GM12878 (cell line): ENCODE measurements at regions of chr15 and their contacts with region 1.

Region 1: GRCh38 chr15:41774062-41774881 is at the start of gene MAPKBP1:
- DNase-seq: peak; percentile 96
- ATAC-seq: peak; percentile 87
- H3K4me3 ChIP-seq: peak within 1 kb of the TSS; percentile 92
- H3K27ac ChIP-seq: peak within 1 kb of the TSS; percentile 77
- H3K4me1 ChIP-seq: peaks cover 12% of the 10 kb centered on the region
- H3K27me3 ChIP-seq: no peaks in the 10 kb centered on the region
- CTCF ChIP-seq: peak; percentile 85 to 98 (median 87)
- EP300 ChIP-seq: no peak; a peak in 1 of 4 replicates
- POLR2A ChIP-seq: peak; percentile 87
- RAD21 ChIP-seq: peak; percentile 53
- polyA plus RNA-seq, gene MAPKBP1: 0.44 to 0.50 TPM

Region 2: GRCh38 chr15:41161336-41161735 is 612.9 kb before region 1 on chr15:
- CTCF ChIA-PET with region 1: no interaction called
- POLR2A ChIA-PET with region 1: no interaction called
- RAD21 ChIA-PET with region 1: no interaction called
- SMC1A ChIA-PET with region 1: no interaction called
- in situ Hi-C with region 1: no loop called
- intact Hi-C with region 1: no loop called
- DNase-seq: no peak
- ATAC-seq: no peak
- H3K4me3 ChIP-seq: no peak overlapping the region
- H3K27ac ChIP-seq: no peak overlapping the region
- H3K4me1 ChIP-seq: no peaks in the 10 kb centered on the region
- H3K27me3 ChIP-seq: no peaks in the 10 kb centered on the region
- CTCF ChIP-seq: no peak
- EP300 ChIP-seq: no peak
- POLR2A ChIP-seq: no peak
- RAD21 ChIP-seq: no peak

Region 3: DNA sequence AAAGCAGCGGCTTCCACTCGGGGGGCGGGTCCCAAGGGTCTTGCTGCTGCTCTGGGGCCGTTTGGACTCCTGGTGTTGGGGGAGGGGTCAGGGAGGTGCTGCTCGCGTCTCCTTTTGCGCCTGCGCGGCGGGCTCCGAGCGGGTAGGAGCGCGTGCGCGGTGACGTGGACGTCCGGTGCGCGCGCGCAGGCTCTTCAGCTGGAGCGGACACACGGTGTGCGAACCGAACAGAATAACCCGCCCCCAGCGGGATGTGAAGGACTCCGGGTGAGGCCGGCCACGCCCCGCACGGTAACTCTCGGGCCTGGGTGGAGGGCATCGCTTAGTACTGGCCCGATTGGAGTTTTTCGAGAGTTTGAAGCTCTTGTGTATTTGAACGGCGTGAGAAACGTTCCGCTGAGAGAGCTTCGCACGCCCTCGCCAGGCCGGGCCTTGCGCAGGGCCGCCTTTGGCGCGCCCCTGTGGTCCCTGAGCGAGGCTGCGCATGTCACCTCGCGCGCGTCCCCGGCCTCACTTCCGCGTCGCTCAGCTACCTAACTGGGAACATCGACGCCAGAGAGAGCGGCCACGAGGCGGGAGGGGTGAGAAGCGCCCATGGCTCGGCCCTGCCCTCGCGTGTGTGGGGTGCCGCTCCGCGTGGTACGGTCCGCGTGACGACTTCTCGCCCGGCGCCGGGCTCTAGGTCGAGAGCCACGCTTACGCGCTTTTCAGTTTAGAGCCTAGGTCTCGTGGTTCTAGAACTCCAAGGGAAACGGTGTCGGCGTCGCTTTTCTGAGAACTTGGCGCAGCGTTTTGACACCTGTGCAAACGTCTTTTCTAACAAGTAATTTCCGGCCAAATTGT is 113.8 kb before region 1 on chr15 and contains the start of gene MGA:
- CTCF ChIA-PET with region 1: interaction called, 25 read pairs
- POLR2A ChIA-PET with region 1: interaction called, 5 read pairs
- RAD21 ChIA-PET with region 1: interaction called, 12 read pairs
- SMC1A ChIA-PET with region 1: interaction called, 19 read pairs
- in situ Hi-C with region 1: no loop called
- intact Hi-C with region 1: no loop called
- DNase-seq: peak; percentile 84
- ATAC-seq: peak; percentile 87
- H3K4me3 ChIP-seq: peak within 1 kb of the TSS; percentile 85
- H3K27ac ChIP-seq: peak within 1 kb of the TSS; percentile 79
- H3K4me1 ChIP-seq: peaks cover 26% of the 10 kb centered on the region
- H3K27me3 ChIP-seq: no peaks in the 10 kb centered on the region
- CTCF ChIP-seq: peak in 2 of 3 experiments; percentile 21 to 29; a peak in 1 of 6 replicates
- EP300 ChIP-seq: 0 out of 4 replicates have a peak, but pooled peaks of 1 of the 2 experiments have one; percentile 7
- POLR2A ChIP-seq: peak; percentile 86
- RAD21 ChIP-seq: no peak
- polyA plus RNA-seq, gene MGA: 2.6 to 2.8 TPM

Region 4: DNA sequence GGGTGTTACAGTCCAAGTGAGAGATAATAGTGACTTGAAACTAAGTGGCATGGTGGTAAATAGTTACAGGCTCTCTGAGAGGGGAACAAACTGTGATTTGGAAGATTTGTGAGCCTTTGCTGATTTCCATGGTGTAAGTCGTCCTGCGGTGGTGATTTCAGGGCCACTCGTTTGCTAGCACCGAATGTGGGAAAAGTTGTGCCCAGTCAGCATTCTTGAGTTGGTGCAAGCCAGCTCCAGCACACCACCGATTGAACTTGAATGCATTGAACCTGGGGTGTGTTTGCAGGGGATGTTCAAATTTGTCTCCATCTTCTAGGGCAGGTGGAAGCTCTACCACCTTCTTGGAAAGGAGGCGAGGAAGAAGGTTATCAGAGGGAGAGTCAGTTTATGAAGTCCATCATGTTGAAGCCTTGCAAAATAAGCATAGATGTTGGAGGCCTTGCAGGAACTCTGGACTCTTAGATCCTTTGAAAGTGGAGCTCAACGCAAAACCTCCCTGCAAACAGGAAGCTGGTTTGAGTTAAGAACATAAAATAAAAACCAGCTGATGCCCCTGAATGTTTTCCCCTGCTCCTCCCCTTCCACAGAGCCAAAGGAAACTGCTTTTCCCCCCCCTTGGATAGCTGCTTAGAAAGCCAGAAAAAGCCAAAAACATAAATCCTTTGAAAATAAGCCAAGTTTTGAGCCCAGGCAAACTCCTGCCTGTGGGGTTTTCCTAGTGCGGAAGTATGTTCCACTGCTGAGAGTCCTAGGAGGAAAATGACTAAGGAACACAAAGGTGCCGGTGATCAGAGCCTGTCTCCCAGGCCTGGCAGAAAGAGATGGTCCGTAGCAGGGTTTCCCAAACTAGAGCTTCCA is 22.0 kb after region 1 on chr15:
- CTCF ChIA-PET with region 1: interaction called, 179 read pairs
- POLR2A ChIA-PET with region 1: interaction called, 170 read pairs
- RAD21 ChIA-PET with region 1: interaction called, 169 read pairs
- SMC1A ChIA-PET with region 1: interaction called, 189 read pairs
- in situ Hi-C with region 1: no loop called
- intact Hi-C with region 1: loop called (anchors 2 kb)
- DNase-seq: no peak
- ATAC-seq: no peak
- H3K4me3 ChIP-seq: no peak overlapping the region
- H3K27ac ChIP-seq: 0 out of 2 replicates have a peak overlapping the region, but pooled peaks have one; percentile 0
- H3K4me1 ChIP-seq: peaks cover 32% of the 10 kb centered on the region
- H3K27me3 ChIP-seq: no peaks in the 10 kb centered on the region
- CTCF ChIP-seq: no peak
- EP300 ChIP-seq: no peak
- POLR2A ChIP-seq: no peak
- RAD21 ChIP-seq: no peak

Region 5: DNA sequence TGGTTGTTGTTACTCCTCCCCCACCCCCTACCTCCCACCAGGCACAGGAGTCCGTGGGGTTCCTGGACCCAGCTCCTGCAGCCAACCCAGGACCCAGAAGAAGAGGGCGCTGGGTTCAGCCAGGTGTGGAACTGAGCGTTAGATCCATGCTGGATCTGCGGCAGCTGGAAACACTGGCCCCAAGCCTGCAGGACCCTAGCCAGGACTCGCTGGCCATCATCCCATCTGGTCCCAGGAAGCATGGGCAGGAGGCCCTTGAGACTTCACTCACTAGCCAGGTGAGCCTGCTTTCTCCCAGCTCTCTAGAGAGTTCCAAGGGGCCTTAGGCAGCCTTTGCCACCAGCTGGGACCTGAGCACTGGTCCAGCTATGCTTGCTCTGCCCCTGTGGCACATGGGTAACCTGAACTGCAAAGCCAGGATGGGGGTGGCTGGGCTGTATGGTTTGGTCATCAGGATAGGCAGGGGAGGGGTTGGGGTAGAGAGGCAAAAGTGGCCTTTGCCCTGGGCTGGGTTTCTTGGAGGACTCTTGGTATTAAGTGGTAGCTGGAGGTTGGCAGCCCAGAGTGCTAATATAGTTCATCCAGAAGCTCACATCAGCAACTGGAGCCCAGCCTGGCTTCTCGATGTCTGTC is 46.6 kb after region 1 on chr15:
- CTCF ChIA-PET with region 1: interaction called, 7 read pairs
- POLR2A ChIA-PET with region 1: interaction called, 3 read pairs
- RAD21 ChIA-PET with region 1: interaction called, 11 read pairs
- SMC1A ChIA-PET with region 1: interaction called, 7 read pairs
- in situ Hi-C with region 1: no loop called
- intact Hi-C with region 1: no loop called
- DNase-seq: no peak
- ATAC-seq: no peak
- H3K4me3 ChIP-seq: no peak overlapping the region
- H3K27ac ChIP-seq: no peak overlapping the region
- H3K4me1 ChIP-seq: no peaks in the 10 kb centered on the region
- H3K27me3 ChIP-seq: no peaks in the 10 kb centered on the region
- CTCF ChIP-seq: no peak
- EP300 ChIP-seq: no peak
- POLR2A ChIP-seq: no peak
- RAD21 ChIP-seq: no peak

Region 6: DNA sequence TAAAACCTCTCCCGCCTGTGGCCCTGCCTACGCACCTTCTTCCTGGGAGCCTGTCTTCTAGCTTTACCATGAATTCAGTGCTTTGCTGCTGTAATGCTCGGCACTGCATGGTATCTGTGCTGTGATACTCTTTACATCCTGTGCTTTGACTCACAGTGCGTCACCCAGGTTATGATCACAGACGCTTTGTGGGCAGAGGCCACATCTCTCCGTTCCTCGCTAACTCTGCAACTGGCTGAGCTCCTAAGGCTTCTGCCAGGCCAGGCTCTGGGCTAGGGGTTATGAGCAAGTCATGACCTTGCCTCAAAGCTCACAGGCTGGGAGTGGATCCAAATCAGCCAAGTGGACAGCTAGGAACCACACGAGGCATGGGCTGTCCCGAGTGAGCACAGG is 96.4 kb after region 1 on chr15:
- CTCF ChIA-PET with region 1: no interaction called
- POLR2A ChIA-PET with region 1: no interaction called
- RAD21 ChIA-PET with region 1: no interaction called
- SMC1A ChIA-PET with region 1: no interaction called
- in situ Hi-C with region 1: no loop called
- intact Hi-C with region 1: no loop called
- DNase-seq: no peak
- ATAC-seq: no peak
- H3K4me3 ChIP-seq: no peak overlapping the region
- H3K27ac ChIP-seq: no peak overlapping the region
- H3K4me1 ChIP-seq: no peaks in the 10 kb centered on the region
- H3K27me3 ChIP-seq: no peaks in the 10 kb centered on the region; a peak in 2 of 4 replicates
- CTCF ChIP-seq: no peak
- EP300 ChIP-seq: no peak
- POLR2A ChIP-seq: no peak
- RAD21 ChIP-seq: no peak

Region 7: DNA sequence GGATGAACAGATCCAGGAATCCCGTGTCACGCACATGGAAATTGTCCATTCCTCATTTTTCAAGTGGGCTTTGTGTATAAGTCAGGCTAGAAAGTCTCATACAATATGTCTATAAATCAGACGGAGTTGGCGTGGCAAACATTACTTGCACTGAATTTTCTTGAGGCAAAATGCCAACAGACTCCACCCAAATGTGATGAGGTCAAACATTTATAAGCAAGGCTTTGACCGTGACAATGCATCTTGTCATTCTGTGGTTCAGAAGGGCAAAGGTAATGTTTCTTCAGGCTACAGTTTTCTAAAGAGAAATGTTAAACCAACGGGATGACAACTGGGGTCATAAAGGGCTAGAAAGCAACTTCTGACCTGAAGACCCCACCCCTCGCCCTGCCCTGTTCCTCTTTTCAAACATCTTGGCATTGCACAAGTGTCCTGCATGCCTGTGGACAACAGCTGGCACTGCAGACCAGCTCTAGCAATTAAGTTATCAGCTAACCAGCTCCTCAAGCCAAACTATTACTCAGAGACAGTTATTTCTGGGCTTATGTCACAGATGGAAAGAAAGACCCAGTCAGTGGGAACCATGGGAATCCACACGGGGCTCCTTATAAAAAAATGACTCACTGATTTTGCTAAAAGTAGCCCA is 156.1 kb after region 1 on chr15:
- CTCF ChIA-PET with region 1: interaction called, 10 read pairs
- POLR2A ChIA-PET with region 1: no interaction called
- RAD21 ChIA-PET with region 1: interaction called, 3 read pairs
- SMC1A ChIA-PET with region 1: interaction called, 3 read pairs
- in situ Hi-C with region 1: no loop called
- intact Hi-C with region 1: no loop called
- DNase-seq: peak; percentile 17
- ATAC-seq: peak; percentile 9
- H3K4me3 ChIP-seq: peak overlapping the region; percentile 26; the same call in 1 of the 2 replicates
- H3K27ac ChIP-seq: peak overlapping the region; percentile 77
- H3K4me1 ChIP-seq: peaks cover 65% of the 10 kb centered on the region
- H3K27me3 ChIP-seq: no peaks in the 10 kb centered on the region
- CTCF ChIP-seq: peak; percentile 17 to 44 (median 17); a peak in 4 of 6 replicates
- EP300 ChIP-seq: no peak
- POLR2A ChIP-seq: no peak
- RAD21 ChIP-seq: no peak